Activated T-helper 1 cell treated with anti-CD3 and anti-CD28 coated beads, Interleukin-12 subunit alpha, Interleukin-12 subunit beta, Interleukin-2, Interleukin-4 antibody, amounts not matched to agents 30 ng/mL and 10 ng/mL and 1 ng/mL, durations not matched to agents 14 hours and 24 hours and 36 hours (primary cell): ENCODE measurements at regions of chr11 and their contacts with region 1.

Region 1: GRCh38 chr11:34438529-34439507 is at the start of gene CAT:
- DNase-seq: peak; percentile 97
- H3K4me3 Mint-ChIP-seq: peak within 1 kb of the TSS; percentile 93
- H3K27ac Mint-ChIP-seq: peak within 1 kb of the TSS; percentile 92
- H3K4me1 Mint-ChIP-seq: peaks cover 26% of the 10 kb centered on the region
- H3K27me3 Mint-ChIP-seq: no peaks in the 10 kb centered on the region
- total RNA-seq, gene CAT: 19.1 and 19.9 TPM in 2 replicates

Region 2: GRCh38 chr11:33161120-33162005 is 1277.5 kb before region 1 on chr11 and contains the start of gene CSTF3:
- intact Hi-C with region 1: loop called (anchors 10 kb)
- DNase-seq: peak; percentile 91
- H3K4me3 Mint-ChIP-seq: peak within 1 kb of the TSS; percentile 100
- H3K27ac Mint-ChIP-seq: peak within 1 kb of the TSS; percentile 100
- H3K4me1 Mint-ChIP-seq: peaks cover 40% of the 10 kb centered on the region
- H3K27me3 Mint-ChIP-seq: no peaks in the 10 kb centered on the region
- total RNA-seq, gene CSTF3: 34.9 and 36.5 TPM in 2 replicates

Region 3: GRCh38 chr11:33700425-33701271 is 738.2 kb before region 1 on chr11 and contains the start of gene C11orf91:
- intact Hi-C with region 1: loop called (anchors 2 kb)
- DNase-seq: peak; percentile 94
- H3K4me3 Mint-ChIP-seq: peak within 1 kb of the TSS; percentile 84
- H3K27ac Mint-ChIP-seq: peak within 1 kb of the TSS; percentile 78
- H3K4me1 Mint-ChIP-seq: peaks cover 29% of the 10 kb centered on the region
- H3K27me3 Mint-ChIP-seq: peaks cover 22% of the 10 kb centered on the region
- total RNA-seq, gene C11orf91: 0.23 TPM in 1 of 2 replicates, not detected in the other

Region 4: GRCh38 chr11:33773987-33774735 is 664.7 kb before region 1 on chr11 and contains the start of gene FBXO3:
- intact Hi-C with region 1: loop called (anchors 1 kb)
- DNase-seq: peak; percentile 80
- H3K4me3 Mint-ChIP-seq: peak within 1 kb of the TSS; percentile 94
- H3K27ac Mint-ChIP-seq: peak within 1 kb of the TSS; percentile 91
- H3K4me1 Mint-ChIP-seq: peaks cover 37% of the 10 kb centered on the region
- H3K27me3 Mint-ChIP-seq: peaks cover 29% of the 10 kb centered on the region
- total RNA-seq, gene FBXO3: 18.6 and 24.3 TPM in 2 replicates

Region 5: DNA sequence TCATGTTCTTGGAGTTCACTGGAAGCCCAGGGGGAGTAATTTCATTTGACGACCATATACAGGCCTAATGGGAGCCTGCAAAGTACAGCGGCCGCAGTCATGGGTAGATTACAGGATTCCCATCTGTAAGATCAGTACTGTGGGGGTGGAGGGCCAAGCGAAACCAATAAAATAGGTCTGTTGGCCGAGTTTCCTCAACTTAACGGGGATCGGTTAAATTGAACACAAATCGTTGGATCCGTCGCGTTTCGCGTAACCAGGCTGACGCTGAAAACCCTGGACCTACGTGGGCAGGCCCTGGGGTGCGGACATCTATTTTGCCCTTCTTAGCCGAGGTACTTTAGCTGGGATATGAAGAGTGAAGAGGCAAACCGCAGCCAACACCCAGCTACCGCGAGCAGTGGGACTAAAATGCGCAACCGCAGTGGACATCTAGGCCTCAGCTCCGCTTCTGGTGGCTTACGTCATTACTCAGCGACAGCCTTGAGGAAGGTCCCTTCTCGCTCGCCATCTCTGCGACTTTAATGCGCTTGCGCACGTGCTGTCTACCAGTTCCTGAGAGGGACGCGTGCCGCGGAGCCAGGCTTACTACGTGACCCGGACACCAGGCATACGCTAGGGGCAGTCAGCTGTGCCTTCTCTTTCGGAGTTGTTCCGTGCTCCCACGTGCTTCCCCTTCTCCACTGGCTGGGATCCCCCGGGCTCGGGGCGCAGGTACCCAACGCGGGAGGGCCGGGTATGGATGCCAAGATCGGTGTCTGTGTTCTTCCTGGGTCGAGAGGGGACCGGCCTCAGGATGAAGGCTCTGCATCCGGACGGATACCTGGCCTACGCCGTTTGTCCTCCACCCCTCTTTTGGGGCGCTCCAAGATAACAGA is 333.5 kb before region 1 on chr11 and contains the start of gene NAT10:
- intact Hi-C with region 1: loop called (anchors 1 kb)
- DNase-seq: peak; percentile 97
- H3K4me3 Mint-ChIP-seq: peak within 1 kb of the TSS; percentile 95
- H3K27ac Mint-ChIP-seq: peak within 1 kb of the TSS; percentile 90
- H3K4me1 Mint-ChIP-seq: peaks cover 48% of the 10 kb centered on the region
- H3K27me3 Mint-ChIP-seq: no peaks in the 10 kb centered on the region
- total RNA-seq, gene NAT10: 157 and 158 TPM in 2 replicates

Region 6: DNA sequence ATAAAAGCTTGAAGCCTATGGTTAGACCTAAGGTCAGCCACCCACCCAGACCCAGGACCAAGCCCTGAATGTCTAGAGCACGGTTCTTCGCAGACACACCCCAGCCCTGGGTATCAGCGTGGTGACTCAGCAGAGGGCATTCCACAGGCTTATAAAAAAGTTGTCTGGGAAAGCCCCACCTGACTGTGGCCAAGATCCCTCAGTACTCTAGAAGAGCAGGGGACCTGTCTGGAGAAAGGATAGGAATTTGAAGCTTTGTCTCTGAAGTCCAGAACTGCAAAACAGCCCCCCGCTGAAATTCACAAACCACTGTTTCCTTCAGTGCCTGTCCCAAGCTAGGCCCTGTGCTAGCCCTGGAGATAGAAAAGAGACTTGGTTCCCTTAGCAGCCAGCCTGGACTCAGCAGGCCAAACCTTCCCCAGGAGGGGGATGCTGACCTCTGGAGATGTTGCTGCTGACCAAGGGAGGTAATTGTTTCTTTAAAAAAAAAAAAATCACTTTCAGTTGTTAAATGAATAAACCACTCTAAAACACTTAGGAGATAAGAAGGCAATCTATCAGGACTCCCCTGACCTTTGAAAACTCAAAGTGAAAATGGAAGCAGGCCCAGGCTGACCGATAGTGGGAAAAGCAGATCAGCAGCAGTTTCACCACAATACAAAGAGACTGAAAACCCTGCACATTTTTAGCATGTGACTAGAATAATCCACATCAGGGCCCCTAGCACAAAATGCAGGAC is 194.9 kb before region 1 on chr11:
- intact Hi-C with region 1: loop called (anchors 5 kb)
- DNase-seq: peak; percentile 36
- H3K4me3 Mint-ChIP-seq: peak overlapping the region; percentile 65
- H3K27ac Mint-ChIP-seq: peak overlapping the region; percentile 71
- H3K4me1 Mint-ChIP-seq: peaks cover 94% of the 10 kb centered on the region
- H3K27me3 Mint-ChIP-seq: peaks cover 11% of the 10 kb centered on the region

Region 7: DNA sequence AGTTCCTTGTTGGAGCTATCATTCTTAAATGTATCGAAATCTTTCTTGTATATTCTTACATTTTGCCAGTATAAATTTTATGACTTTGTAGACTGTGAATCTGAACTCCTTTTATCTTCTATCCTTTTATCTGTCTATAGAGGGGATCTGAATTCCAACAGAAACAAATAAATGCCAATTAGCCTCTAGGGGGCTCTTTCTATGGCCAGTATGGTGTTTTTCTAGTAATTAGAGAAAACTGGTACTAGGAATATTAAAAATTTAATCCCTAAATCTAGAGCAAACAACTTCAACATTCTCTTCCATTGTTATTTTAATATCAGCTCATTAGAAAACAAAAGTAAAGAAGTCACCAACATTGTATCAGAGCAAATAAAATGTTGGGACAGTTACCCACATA is 21.6 kb before region 1 on chr11:
- intact Hi-C with region 1: no loop called
- DNase-seq: no peak
- H3K4me3 Mint-ChIP-seq: no peak overlapping the region
- H3K27ac Mint-ChIP-seq: no peak overlapping the region
- H3K4me1 Mint-ChIP-seq: no peaks in the 10 kb centered on the region
- H3K27me3 Mint-ChIP-seq: peaks cover 14% of the 10 kb centered on the region

Region 8: GRCh38 chr11:35173011-35173511 is 734.2 kb after region 1 on chr11:
- intact Hi-C with region 1: loop called (anchors 10 kb)
- DNase-seq: no peak
- H3K4me3 Mint-ChIP-seq: peak overlapping the region; percentile 56
- H3K27ac Mint-ChIP-seq: peak overlapping the region; percentile 75
- H3K4me1 Mint-ChIP-seq: peaks cover 92% of the 10 kb centered on the region
- H3K27me3 Mint-ChIP-seq: no peaks in the 10 kb centered on the region